ENCODE measurements at regions of chr12 and their contacts with region 1.

Region 1: DNA sequence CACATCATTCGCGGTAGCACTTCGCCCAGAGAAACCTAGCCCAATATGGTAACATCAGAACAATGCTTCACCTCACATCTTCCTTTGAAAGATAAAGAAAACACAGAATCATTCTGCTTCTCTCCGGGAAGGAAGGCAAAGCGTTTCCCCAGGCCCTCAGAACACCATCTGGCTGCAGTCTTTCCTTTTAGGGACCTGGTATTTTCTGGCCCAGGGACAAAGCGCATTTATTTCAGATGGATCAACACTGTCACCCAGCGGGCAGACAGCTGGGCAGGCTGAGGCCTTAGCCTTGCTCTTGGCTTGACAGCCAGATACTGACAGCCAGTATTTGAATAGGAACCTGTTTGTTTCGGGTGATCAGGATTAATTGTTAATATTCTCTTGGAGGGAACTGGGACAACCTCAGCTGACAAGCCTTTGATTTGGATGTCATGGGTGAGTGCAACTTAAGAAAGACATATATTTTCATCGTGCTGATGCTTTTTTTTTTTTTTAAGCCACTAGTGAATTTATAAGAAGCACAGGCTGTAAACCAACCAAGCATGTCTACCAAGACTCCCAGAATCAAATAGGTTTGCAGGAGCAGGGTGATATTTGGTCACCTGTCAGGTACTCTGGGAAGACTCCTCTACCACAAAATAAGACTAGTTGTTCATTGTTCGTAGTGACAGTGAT is 118.9 kb downstream of the VEZT start:
- DNase-seq: peak; percentile 66
- ATAC-seq: peak; percentile 90 to 91
- H3K4me3 ChIP-seq: no peak overlapping the region
- H3K27ac ChIP-seq: peak overlapping the region; percentile 51
- H3K4me1 ChIP-seq: peaks cover 10% of the 10 kb centered on the region
- H3K27me3 ChIP-seq: no peaks in the 10 kb centered on the region
- CTCF ChIP-seq: peak; percentile 84

Region 2: DNA sequence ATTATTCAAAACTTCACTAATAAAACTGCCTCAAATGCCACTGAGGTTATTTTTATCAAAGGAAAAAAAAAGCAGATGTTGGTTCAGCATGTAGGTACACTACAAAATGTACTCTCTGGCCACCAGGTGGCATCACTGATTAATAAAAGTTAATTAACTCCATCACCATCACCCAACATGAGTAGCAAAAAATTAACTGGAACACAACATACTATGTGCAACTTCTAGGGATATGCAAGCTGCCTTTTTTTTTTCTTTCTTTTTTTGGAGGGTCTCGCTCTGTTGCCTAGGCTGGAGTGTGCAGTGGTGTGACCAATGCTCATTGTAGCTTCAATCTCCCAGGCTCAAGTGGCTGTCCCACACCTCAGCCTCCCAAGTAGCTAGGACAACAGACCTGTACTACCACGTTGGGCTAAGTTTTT is 219.3 kb before region 1 on chr12:
- intact Hi-C with region 1: loop called (anchors 5 kb)
- DNase-seq: no peak
- ATAC-seq: peak; percentile 82 to 85
- H3K4me3 ChIP-seq: no peak overlapping the region
- H3K27ac ChIP-seq: peak overlapping the region; percentile 53
- H3K4me1 ChIP-seq: peaks cover 24% of the 10 kb centered on the region
- H3K27me3 ChIP-seq: no peaks in the 10 kb centered on the region
- CTCF ChIP-seq: peak; percentile 78